ENCODE measurements at regions of chr12 and their contacts with region 1.

Region 1: GRCh38 chr12:94140556-94140955 is 7.8 kb upstream of the PLXNC1 start:
- DNase-seq: no peak
- ATAC-seq: peak; percentile 83
- H3K4me3 ChIP-seq: no peak overlapping the region
- H3K27ac ChIP-seq: no peak overlapping the region
- H3K4me1 ChIP-seq: no peaks in the 10 kb centered on the region; the same call in 1 of the 2 replicates
- H3K27me3 ChIP-seq: no peaks in the 10 kb centered on the region
- CTCF ChIP-seq: peak; percentile 50 to 54 (median 54)
- EP300 ChIP-seq: no peak
- POLR2A ChIP-seq: no peak
- RAD21 ChIP-seq: peak; percentile 72

Region 2: GRCh38 chr12:93742110-93742934 is 398.2 kb before region 1 on chr12:
- CTCF ChIA-PET with region 1: no interaction called
- POLR2A ChIA-PET with region 1: no interaction called
- RAD21 ChIA-PET with region 1: no interaction called
- SMC1A ChIA-PET with region 1: no interaction called
- in situ Hi-C with region 1: no loop called
- intact Hi-C with region 1: no loop called
- DNase-seq: no peak
- ATAC-seq: peak; percentile 99
- H3K4me3 ChIP-seq: peak overlapping the region; percentile 67
- H3K27ac ChIP-seq: no peak overlapping the region
- H3K4me1 ChIP-seq: no peaks in the 10 kb centered on the region
- H3K27me3 ChIP-seq: no peaks in the 10 kb centered on the region
- CTCF ChIP-seq: peak; percentile 28 to 58 (median 37); a peak in 4 of 6 replicates
- EP300 ChIP-seq: no peak
- POLR2A ChIP-seq: peak; percentile 31; the same call in 1 of the 2 replicates
- RAD21 ChIP-seq: peak; percentile 84

Region 3: GRCh38 chr12:93943766-93944165 is 196.8 kb before region 1 on chr12:
- CTCF ChIA-PET with region 1: no interaction called
- POLR2A ChIA-PET with region 1: no interaction called
- RAD21 ChIA-PET with region 1: no interaction called
- SMC1A ChIA-PET with region 1: no interaction called
- in situ Hi-C with region 1: no loop called
- intact Hi-C with region 1: no loop called
- DNase-seq: no peak
- ATAC-seq: no peak
- H3K4me3 ChIP-seq: no peak overlapping the region
- H3K27ac ChIP-seq: no peak overlapping the region
- H3K4me1 ChIP-seq: no peaks in the 10 kb centered on the region
- H3K27me3 ChIP-seq: no peaks in the 10 kb centered on the region; a peak in 1 of 4 replicates
- CTCF ChIP-seq: no peak
- EP300 ChIP-seq: no peak
- POLR2A ChIP-seq: no peak
- RAD21 ChIP-seq: no peak

Region 4: DNA sequence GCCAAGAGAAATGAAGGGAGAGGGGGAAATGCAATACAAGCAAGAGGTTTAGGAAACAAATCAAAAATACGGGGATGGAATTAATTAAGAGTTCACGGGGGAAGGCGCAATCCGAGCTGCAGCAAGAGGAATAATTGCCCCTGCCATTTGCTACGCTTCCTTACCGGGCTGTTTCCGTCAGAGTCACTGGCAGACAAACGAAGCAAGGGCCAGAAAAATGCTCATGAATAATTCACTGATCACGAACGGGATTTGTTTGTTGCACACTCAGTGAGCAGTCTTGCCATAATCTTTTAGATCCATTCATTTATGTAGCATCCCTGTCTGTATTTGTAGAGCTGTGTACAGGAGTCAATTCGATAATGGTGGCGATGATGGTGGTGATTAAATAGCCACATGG is 46.8 kb after region 1 on chr12:
- CTCF ChIA-PET with region 1: no interaction called
- POLR2A ChIA-PET with region 1: no interaction called
- RAD21 ChIA-PET with region 1: no interaction called
- SMC1A ChIA-PET with region 1: no interaction called
- in situ Hi-C with region 1: no loop called
- intact Hi-C with region 1: no loop called
- DNase-seq: no peak
- ATAC-seq: no peak
- H3K4me3 ChIP-seq: no peak overlapping the region
- H3K27ac ChIP-seq: no peak overlapping the region
- H3K4me1 ChIP-seq: peaks cover 17% of the 10 kb centered on the region
- H3K27me3 ChIP-seq: no peaks in the 10 kb centered on the region
- CTCF ChIP-seq: no peak
- EP300 ChIP-seq: no peak
- POLR2A ChIP-seq: no peak
- RAD21 ChIP-seq: no peak

Region 5: DNA sequence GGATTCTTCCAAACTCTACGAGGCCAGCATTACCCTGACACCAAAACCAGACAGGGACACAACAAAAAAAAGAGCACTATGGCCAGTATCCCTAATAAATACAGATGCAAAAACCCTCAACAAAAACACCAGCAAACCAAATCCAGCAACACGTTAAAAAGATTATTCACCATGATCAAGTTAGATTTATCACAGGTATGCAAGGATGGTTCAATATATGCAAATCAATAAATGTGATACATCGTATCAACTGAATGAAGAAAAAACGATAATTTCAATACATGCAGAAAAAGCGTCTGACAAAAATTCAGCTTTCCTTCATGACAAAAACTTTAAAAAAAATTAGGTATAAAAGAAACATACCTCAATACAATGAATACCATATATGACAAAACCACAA is 219.2 kb after region 1 on chr12:
- CTCF ChIA-PET with region 1: no interaction called
- POLR2A ChIA-PET with region 1: no interaction called
- RAD21 ChIA-PET with region 1: no interaction called
- SMC1A ChIA-PET with region 1: no interaction called
- in situ Hi-C with region 1: no loop called
- intact Hi-C with region 1: no loop called
- DNase-seq: no peak
- ATAC-seq: no peak
- H3K4me3 ChIP-seq: no peak overlapping the region
- H3K27ac ChIP-seq: no peak overlapping the region
- H3K4me1 ChIP-seq: no peaks in the 10 kb centered on the region
- H3K27me3 ChIP-seq: no peaks in the 10 kb centered on the region
- CTCF ChIP-seq: no peak
- EP300 ChIP-seq: no peak
- POLR2A ChIP-seq: no peak
- RAD21 ChIP-seq: no peak

Region 6: GRCh38 chr12:94435511-94435927 is 295.0 kb after region 1 on chr12:
- CTCF ChIA-PET with region 1: interaction called, 29 read pairs
- POLR2A ChIA-PET with region 1: no interaction called
- RAD21 ChIA-PET with region 1: interaction called, 13 read pairs
- SMC1A ChIA-PET with region 1: interaction called, 19 read pairs
- in situ Hi-C with region 1: no loop called
- intact Hi-C with region 1: loop called (anchors 5 kb)
- DNase-seq: no peak
- ATAC-seq: peak; percentile 75
- H3K4me3 ChIP-seq: peak overlapping the region; percentile 12; the same call in 1 of the 2 replicates
- H3K27ac ChIP-seq: peak overlapping the region; percentile 65
- H3K4me1 ChIP-seq: peaks cover 11% of the 10 kb centered on the region
- H3K27me3 ChIP-seq: no peaks in the 10 kb centered on the region
- CTCF ChIP-seq: no peak
- EP300 ChIP-seq: no peak
- POLR2A ChIP-seq: no peak
- RAD21 ChIP-seq: no peak

Measured in GM12878 (cell line).